ENCODE measurements at regions of chr7 and their contacts with region 1.

Region 1: DNA sequence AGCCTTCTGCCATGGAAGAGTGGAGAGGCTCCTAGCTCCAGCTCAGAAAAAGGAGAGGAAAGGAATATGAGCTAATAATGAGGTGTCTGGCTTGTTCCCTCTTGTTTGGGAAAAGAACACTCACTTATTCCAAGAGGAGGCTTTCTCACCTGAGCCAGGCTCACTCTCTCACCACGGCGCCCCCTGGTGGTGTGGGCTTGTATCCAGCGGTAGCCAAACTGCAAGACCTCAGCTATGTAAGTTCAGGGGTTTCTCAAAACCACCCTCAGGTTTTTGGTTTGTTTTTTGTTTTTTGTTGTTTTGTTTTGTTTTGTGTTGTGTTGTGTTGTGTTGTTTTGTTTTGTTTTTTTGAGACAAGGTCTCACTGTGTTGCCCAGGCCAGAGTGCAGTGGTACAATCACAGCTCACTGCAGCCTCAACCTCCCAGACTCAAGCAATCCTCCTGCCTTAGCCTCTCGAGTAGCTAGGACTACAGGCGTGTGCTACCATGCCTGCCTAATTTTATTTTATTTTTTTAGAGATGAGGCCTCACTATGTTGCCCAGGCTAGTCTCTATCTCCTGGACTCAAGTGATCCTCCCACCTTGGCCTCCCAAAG is 124.0 kb downstream of the TMEM130 start:
- DNase-seq: peak in 1 of 2 experiments; percentile 97
- H3K4me3 ChIP-seq: no peak overlapping the region
- H3K27ac ChIP-seq: no peak overlapping the region
- H3K4me1 ChIP-seq: no peaks in the 10 kb centered on the region; a peak in 1 of 7 replicates
- H3K27me3 ChIP-seq: no peaks in the 10 kb centered on the region
- CTCF ChIP-seq: peak; percentile 86 to 89 (median 86)
- EP300 ChIP-seq: no peak
- POLR2A ChIP-seq: no peak
- RAD21 ChIP-seq: peak; percentile 79 to 83

Region 2: DNA sequence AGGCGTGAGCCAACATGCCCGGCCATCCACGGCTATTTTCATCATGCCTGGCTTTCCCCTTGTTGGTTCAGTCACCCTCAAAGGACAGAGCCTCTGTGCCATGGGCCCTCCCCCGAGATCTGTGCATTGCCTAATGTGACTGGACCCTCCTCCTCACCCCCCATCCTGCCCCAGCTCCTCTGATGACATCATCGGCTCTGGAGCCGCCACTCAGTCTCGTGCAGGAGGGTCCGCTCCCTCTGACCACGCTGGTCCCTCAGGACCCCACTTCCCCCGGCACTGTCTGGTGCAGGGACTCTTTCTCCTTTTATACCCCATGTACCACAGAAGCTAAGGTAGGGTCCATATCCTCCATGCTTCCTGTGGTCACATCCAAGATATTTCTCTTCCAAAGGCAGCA is 311.7 kb before region 1 on chr7:
- CTCF ChIA-PET with region 1: interaction called, 92 read pairs
- POLR2A ChIA-PET with region 1: interaction called, 4 read pairs
- DNase-seq: no peak
- H3K4me3 ChIP-seq: no peak overlapping the region
- H3K27ac ChIP-seq: no peak overlapping the region
- H3K4me1 ChIP-seq: no peaks in the 10 kb centered on the region
- H3K27me3 ChIP-seq: no peaks in the 10 kb centered on the region
- CTCF ChIP-seq: no peak
- EP300 ChIP-seq: no peak
- POLR2A ChIP-seq: no peak
- RAD21 ChIP-seq: no peak

Region 3: DNA sequence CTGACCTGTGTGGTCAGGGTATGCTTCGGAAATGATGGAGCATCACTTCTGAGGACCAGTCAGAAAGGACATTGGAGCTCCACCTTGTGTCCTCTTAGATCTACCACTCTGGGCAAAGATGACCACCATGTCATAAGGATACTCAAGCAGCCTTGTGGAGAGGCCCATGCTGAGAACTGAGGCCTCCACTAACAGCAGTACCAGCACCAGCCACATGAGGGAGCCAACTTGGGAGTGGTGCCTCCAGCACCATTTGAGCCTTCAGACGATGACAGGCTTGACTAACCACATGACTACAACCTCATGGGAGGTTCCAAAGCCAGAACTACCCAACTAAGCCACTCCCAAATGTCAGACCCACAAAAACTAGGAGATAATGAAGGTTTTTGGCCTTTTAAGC is 12.8 kb before region 1 on chr7:
- CTCF ChIA-PET with region 1: interaction called, 67 read pairs
- POLR2A ChIA-PET with region 1: no interaction called
- DNase-seq: peak in 1 of 2 experiments; percentile 96
- H3K4me3 ChIP-seq: no peak overlapping the region
- H3K27ac ChIP-seq: no peak overlapping the region
- H3K4me1 ChIP-seq: peaks cover 0 to 12% (median 2%) of the 10 kb centered on the region in 4 experiments; a peak in 4 of 7 replicates
- H3K27me3 ChIP-seq: no peaks in the 10 kb centered on the region
- CTCF ChIP-seq: peak; percentile 70 to 97 (median 92)
- EP300 ChIP-seq: no peak
- POLR2A ChIP-seq: no peak
- RAD21 ChIP-seq: peak; percentile 58 to 74